Psoas muscle (tissue), 8 donors: ENCODE measurements at regions of chr9 and their contacts with region 1.

Region 1: DNA sequence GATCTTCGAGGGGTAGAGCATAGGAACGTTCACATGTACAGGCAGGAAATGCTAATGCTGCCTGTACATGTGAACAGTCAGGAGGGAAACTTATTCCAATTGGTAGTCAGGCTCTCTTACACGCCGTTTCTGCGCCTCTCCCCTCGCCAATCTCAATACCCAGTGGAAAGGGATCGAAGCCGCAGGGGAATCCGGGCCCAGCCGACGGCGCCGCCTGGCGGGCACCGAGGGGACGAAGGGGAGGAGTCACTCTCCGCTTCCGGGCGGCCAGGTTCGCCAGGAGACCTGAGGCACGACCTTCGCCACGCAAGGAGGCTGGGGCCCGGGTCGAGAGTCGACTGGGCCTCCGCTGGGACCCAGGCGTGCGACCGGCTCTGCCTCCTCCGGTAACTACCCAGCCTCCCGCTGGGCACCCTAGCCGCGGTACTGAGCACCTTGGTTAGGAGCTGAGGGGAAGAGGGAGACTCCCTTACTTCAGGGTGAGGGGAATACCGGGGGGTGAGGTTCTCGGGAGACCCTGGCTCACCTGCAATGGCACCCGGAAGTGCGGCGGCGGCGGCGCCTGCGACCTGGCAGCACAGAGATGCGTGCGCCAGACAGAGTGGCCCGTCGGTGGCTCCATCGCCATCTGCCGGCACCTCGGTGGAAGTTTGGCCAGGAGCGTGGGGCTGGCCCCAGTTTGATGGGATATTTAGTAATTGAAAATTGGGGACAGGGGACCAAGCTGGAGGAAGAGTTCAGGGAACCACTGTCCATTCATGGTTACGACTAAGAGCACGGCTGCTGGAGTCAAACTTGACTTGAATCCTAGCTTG is at the start of gene PIGO:
- DNase-seq: peak; percentile 90 to 95
- ATAC-seq: peak; percentile 94 to 97 (median 95)
- H3K4me3 ChIP-seq: peak within 1 kb of the TSS; percentile 87
- H3K27ac ChIP-seq: peak within 1 kb of the TSS; percentile 98
- H3K4me1 ChIP-seq: peaks cover 3% of the 10 kb centered on the region
- H3K27me3 ChIP-seq: no peaks in the 10 kb centered on the region
- CTCF ChIP-seq: peak; percentile 59
- total RNA-seq, gene PIGO: 6.8 to 11.3 (median 8.6) TPM

Region 2: GRCh38 chr9:35079426-35080341 is 16.6 kb before region 1 on chr9 and contains the start of gene FANCG:
- intact Hi-C with region 1: loop called in 1 of 2 experiments (anchors 2 kb)
- DNase-seq: peak; percentile 90 to 95
- ATAC-seq: peak; percentile 96 to 98 (median 98)
- H3K4me3 ChIP-seq: peak within 1 kb of the TSS; percentile 74
- H3K27ac ChIP-seq: peak within 1 kb of the TSS; percentile 68
- H3K4me1 ChIP-seq: peaks cover 16% of the 10 kb centered on the region
- H3K27me3 ChIP-seq: no peaks in the 10 kb centered on the region
- CTCF ChIP-seq: no peak
- total RNA-seq, gene FANCG: 2.9 to 6.0 (median 3.7) TPM